ENCODE measurements at regions of chr7 and their contacts with region 1.

Region 1: DNA sequence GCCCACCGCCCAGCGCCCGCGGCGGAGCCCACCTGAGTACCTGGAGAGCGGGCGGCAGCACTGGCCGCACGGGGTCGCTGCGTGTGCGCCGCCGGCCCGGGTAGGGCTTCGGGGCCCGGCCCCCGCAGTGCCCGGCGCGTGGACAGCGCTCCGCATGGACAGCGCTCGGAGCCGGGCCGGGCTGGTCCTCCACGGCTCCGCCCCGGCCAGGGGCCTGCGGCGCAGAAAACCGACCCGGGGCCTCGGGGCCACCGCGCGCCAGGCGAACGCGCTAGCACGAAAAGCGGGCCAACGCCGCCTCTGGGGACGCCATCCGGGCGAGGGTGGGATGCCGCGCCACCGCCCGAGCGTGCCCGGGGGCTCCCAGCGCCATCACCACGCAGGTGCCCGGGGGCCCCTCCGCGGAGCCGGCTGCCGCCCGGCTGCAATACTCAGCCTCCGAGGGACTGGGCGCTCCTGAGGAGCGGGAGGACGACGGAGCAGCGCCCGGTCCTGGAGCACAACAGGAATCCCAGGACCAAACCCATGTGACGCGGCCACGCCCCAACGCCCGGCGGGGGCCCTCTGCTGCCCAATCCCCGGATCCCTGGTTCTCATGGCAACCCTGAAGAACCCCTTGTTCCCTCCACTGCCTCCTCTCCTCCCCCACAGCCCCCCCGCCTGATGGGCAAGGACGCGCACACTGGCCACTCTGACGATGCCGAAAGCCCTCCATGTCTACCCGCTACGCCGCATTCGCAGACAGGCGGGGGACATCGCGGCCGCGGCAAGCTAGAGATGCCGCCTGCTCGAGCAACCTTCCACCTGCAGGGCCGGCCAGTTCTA is at the start of gene GRB10:
- DNase-seq: peak; percentile 77 to 91 (median 87)
- H3K4me3 ChIP-seq: peak within 1 kb of the TSS; percentile 34 to 78 (median 64)
- H3K27ac ChIP-seq: peak within 1 kb of the TSS in 57 of 59 donors; percentile 54 to 92 (median 84)
- H3K27me3 ChIP-seq: peaks cover 0 to 8% (median 0%) of the 10 kb centered on the region in 45 donors
- CTCF ChIP-seq: peak in 32 of 56 donors; percentile 2 to 67 (median 28)
- total RNA-seq, gene GRB10: 74.7 to 208 (median 113) TPM

Region 2: GRCh38 chr7:50467817-50468610 is 314.6 kb before region 1 on chr7:
- intact Hi-C with region 1: loop called in 1 of 2 experiments (anchors 10 kb)
- DNase-seq: peak; percentile 73 to 87 (median 84)
- H3K4me3 ChIP-seq: peak overlapping the region in 46 of 59 donors; percentile 5 to 61 (median 32)
- H3K27ac ChIP-seq: peak overlapping the region in 5 of 59 donors; percentile 3 to 28 (median 13)
- H3K27me3 ChIP-seq: no peaks in the 10 kb centered on the region
- CTCF ChIP-seq: peak; percentile 75 to 97 (median 90)

Region 3: DNA sequence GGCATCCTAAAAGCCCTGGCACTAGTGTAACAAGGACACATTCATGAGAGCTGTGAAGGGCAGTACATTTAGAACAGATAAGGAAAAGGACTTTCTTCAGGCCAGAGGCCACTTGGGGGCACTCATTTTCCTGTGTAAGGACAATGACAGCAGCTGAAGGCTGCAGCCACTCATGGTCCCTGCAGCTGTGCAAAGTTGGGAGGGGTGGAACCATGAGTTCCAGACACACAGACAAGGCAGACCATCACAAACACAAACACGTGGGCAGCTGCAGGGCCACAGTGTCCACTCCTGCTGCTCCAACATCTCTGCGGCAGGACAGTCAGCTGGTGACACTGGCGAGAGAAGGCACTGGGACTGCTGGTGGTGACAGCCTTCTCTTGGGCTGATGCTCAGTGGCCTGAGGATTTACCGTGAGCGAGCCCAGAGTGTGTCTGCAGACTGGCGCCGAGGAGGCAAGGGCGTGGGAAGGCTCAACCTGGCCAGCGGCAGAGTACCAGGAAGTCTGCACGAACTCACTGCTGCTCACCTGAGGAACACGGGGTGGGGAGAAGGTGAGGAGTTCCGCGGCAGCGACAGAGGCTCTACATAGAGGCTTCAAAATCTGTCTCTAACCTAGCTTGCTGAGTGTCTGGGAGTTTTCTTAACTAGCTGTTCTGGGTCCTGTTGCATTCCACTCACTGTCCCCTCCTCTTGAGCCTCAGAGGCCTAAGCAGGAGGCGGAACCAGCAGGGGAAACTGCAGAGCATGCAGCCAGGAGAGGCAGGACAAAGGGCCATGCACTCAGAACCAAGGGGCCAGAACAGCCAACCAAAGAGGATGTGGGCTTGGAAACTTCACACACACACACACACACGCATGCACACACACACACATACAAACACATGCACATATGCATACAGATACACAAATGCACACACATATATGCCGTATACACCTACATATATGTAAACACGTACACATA is 140.9 kb before region 1 on chr7:
- intact Hi-C with region 1: loop called in 1 of 2 experiments (anchors 5 kb)
- DNase-seq: peak in 9 of 10 donors; percentile 81 to 98 (median 90)
- H3K4me3 ChIP-seq: peak overlapping the region in 51 of 59 donors; percentile 1 to 60 (median 38)
- H3K27ac ChIP-seq: peak overlapping the region in 58 of 59 donors; percentile 63 to 98 (median 92)
- H3K27me3 ChIP-seq: no peaks in the 10 kb centered on the region
- CTCF ChIP-seq: peak in 55 of 56 donors; percentile 35 to 81 (median 62)

Region 4: DNA sequence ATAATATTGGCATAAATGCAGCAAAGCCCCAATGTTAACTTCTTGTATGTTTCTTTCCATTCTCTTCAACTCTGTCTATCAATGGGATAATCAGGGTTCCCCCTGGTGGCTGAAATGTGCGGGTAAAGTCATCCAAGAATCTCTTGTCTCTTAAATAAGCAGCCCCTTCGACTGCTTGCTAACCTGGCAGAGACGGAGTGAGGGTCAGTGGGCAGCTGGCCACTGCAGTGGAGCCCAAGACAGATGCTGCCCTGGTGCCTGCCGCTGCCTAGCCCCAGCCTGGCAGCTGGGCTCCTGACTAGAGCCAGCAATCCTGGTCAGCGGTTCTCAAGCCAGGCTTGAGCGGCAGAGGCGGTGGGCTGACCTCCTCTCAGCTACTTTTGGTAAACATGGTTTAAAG is 285.2 kb after region 1 on chr7:
- intact Hi-C with region 1: loop called (anchors 5 to 10 kb)
- DNase-seq: peak in 6 of 10 donors; percentile 33 to 86 (median 61)
- H3K4me3 ChIP-seq: peak overlapping the region in 25 of 59 donors; percentile 2 to 51 (median 12)
- H3K27ac ChIP-seq: peak overlapping the region in 58 of 59 donors; percentile 5 to 94 (median 78)
- H3K27me3 ChIP-seq: no peaks in the 10 kb centered on the region
- CTCF ChIP-seq: peak; percentile 51 to 83 (median 74)

Measured in dorsolateral prefrontal cortex (tissue), 120 donors.